Breast epithelium (tissue), 4 donors: ENCODE measurements at regions of chr12 and their contacts with region 1.

Region 1: GRCh38 chr12:132602572-132603239 is 7.7 kb downstream of the LRCOL1 start:
- DNase-seq: no peak
- H3K4me3 ChIP-seq: peak overlapping the region; percentile 34 to 60 (median 35)
- H3K27ac ChIP-seq: peak overlapping the region in 1 of 2 donors; percentile 80
- H3K4me1 ChIP-seq: peaks cover 0 to 7% of the 10 kb centered on the region in 2 donors
- H3K27me3 ChIP-seq: peaks cover 0 to 49% of the 10 kb centered on the region in 2 donors
- CTCF ChIP-seq: no peak
- POLR2A ChIP-seq: no peak

Region 2: DNA sequence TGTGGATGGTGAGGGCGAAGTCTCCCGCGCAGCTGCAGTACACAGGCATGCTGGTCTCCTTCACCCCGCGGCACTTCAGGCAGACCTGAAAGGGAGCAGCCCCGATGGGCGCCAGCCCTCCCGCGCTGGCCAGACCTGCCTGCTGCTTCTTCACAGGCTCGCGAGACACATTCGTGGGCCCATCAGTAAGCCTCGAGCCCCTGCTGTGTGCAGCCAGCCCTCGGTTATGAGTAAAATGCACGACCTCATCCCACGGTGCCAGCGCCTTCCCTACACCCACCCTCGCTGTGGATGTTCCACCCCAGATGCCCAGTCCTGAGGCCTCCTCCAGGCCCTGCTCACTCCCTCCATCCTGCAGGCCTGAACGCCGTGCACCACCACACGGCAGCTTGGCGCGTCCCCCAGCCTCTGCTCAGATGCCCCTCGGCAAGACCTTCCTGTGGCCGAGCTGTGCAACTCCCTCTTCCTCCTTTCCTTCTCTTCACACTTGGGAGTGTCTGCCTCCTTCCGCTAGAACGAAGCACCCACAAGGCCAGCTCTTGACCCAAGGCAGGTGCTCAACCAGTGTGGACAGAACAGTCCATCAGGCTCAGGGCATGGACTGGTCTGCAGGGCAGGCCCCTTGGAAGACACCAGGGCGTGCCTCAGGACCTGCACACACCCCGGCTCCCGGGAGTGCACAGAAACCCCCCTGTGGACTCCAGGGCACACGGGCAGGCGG is 22.4 kb after region 1 on chr12:
- intact Hi-C with region 1: loop called (anchors 1 kb)
- DNase-seq: no peak
- H3K4me3 ChIP-seq: no peak overlapping the region
- H3K27ac ChIP-seq: no peak overlapping the region
- H3K4me1 ChIP-seq: peaks cover 3 to 19% of the 10 kb centered on the region in 2 donors
- H3K27me3 ChIP-seq: peaks cover under 1 to 4% of the 10 kb centered on the region in 2 donors
- CTCF ChIP-seq: no peak
- POLR2A ChIP-seq: no peak

Region 3: GRCh38 chr12:132904718-132905328 is 302.1 kb after region 1 on chr12:
- intact Hi-C with region 1: no loop called
- DNase-seq: peak; percentile 38 to 74
- H3K4me3 ChIP-seq: peak overlapping the region in 2 of 3 donors; percentile 32 to 53
- H3K27ac ChIP-seq: no peak overlapping the region
- H3K4me1 ChIP-seq: no peaks in the 10 kb centered on the region
- H3K27me3 ChIP-seq: no peaks in the 10 kb centered on the region
- CTCF ChIP-seq: peak; percentile 46 to 77 (median 48)
- POLR2A ChIP-seq: no peak